ENCODE measurements at regions of chr9 and their contacts with region 1.

Region 1: DNA sequence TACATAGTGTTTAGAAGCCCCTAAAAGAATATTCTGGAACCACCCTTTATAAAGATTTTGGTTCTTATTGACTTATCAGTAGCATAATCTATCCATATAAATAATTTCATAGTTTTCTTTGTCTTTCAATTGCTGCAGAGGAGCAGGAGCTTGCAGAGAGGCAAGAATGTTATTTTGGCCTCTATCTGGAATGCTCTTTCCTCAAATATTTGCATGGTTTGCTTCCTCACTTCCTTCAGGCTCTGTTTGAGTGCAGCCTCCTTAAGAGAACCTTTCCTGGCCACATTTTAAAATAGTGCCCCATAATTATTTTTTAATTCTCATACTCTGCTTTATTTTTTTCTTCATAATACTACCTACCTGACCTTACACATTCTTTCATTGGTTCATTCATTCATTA is 1.5 kb downstream of the C5 start:
- DNase-seq: no peak
- H3K4me3 ChIP-seq: peak overlapping the region in 1 of 4 donors; percentile 18
- H3K27ac ChIP-seq: no peak overlapping the region
- H3K4me1 ChIP-seq: peaks cover 0 to 18% (median 10%) of the 10 kb centered on the region in 4 donors
- H3K27me3 ChIP-seq: no peaks in the 10 kb centered on the region
- CTCF ChIP-seq: no peak
- EP300 ChIP-seq: no peak
- POLR2A ChIP-seq: no peak

Region 2: DNA sequence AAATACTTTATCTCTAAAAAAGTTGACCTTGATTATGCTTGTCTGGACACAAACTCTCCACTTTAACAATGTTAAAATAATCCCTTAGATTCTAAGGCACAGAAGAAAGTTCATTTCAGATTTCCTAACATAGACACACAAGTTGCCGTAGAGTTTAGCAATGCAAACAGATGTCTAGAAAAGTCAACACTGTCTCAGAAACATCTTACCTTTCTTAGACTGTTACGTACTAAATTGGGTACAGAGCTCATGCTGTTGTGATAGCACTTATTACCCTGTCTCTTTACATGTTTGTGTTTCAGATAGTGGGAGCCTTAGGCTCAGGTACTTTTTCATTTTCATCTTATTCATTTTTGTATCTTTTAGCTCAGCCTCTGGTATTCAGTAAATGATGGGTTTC is 50.5 kb before region 1 on chr9:
- intact Hi-C with region 1: loop called (anchors 10 kb)
- DNase-seq: no peak
- H3K4me3 ChIP-seq: no peak overlapping the region
- H3K27ac ChIP-seq: no peak overlapping the region
- H3K4me1 ChIP-seq: no peaks in the 10 kb centered on the region
- H3K27me3 ChIP-seq: no peaks in the 10 kb centered on the region
- CTCF ChIP-seq: no peak
- EP300 ChIP-seq: no peak
- POLR2A ChIP-seq: no peak